HCT116 (cell line): ENCODE measurements at regions of chr15 and their contacts with region 1.

Region 1: DNA sequence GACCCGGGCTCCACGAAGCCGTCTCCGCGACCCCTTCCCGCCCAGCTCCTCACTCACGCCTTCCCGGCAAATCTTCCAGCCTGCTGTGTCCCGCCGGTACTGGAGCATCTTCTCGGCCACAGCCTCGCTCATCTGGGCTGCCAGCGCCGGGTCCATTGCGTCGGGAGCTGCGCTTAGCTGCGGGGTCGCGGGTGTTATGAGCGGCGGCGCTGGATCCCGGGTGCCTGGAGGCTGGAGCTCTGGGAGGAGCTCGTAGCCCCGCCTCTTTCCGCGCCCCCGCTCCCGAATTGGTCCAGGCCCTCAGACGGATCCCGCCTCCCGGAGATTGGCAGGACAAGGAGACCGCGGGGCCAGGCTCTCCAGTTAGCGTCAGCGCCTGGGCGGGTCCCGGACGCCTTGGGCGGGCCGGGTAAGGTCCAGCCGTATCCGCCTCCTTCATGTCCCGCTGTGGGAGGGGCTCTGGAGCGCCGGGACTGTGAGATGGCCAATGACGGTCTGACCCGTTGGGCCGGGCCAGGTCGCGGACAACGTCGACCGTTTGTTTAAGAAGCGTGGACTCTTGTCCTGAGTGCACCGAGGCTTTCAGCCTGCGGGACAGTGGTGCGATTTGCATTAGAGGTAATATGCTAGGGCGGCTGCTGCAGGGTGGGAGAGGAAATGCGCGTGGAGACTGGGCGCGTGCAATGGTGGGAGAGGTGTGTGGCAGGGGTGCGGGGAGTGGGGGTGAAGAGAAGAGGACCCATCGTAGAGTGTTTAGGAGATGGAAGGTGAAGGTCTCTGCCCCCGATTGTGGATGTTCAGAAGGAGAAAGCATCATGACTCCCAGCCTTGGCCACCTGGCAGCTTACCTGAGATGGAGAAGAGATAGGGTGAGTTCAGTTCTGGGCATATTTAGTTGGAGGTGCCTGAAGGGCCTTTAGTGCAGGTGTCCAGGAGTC is at the start of gene STARD5:
- DNase-seq: peak; percentile 90
- ATAC-seq: peak; percentile 100
- H3K4me3 ChIP-seq: peak within 1 kb of the TSS; percentile 71 to 81
- H3K27ac ChIP-seq: no peak within 1 kb of the TSS
- H3K4me1 ChIP-seq: peaks cover 2 to 16% of the 10 kb centered on the region in 2 experiments; a peak in 3 of 4 replicates
- H3K27me3 ChIP-seq: no peaks in the 10 kb centered on the region
- CTCF ChIP-seq: no peak
- POLR2A ChIP-seq: peak; percentile 35
- RAD21 ChIP-seq: no peak
- total RNA-seq, gene STARD5: 4.0 TPM

Region 2: DNA sequence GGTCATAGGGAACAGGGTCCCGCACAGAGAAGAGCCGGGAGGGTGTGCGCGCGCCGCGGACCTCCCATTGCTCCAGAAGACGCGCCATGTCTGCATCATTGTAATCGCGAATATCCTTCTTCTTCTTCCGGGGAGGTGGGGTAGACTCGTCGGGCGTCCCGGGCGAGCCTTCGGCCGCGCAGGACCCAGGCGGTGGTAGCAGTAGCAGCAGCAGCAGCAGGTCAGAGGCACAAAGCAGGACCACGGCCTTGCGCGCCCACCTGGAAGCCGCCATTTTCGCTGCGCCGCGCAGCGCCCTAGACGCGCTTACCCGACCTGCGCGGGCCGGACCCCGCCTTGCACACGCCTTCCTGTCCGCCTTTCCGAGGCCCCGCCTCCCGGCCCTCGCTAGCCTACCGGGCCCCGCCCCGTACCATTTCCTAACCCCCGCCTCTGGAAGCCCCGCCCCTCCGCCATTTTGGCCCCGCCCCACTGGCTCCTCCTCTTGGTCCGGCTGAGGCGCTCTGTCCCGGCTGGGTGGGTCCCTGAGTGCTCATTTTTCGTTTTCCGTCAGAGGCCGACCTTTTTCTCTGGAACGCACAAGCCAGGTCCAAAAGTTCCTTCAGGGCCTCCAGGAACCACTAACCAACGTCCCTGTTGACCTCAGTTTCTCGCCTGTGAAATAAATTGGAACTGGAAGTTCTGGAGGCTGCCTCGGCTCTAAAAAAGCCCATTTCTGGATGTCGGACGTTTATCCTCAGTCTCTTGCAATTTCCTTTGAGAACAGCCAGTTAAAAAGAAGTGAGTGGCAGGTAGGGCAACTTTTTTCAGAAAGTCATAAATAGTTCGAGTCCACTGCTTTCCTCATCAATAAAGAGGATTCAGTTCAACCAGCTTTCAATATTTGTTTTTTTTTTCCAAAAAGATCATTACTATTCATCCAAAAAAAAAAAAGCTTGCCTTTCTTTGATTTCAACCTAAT is 334.4 kb before region 1 on chr15 and contains the start of gene MESD:
- CTCF ChIA-PET with region 1: no interaction called
- POLR2A ChIA-PET with region 1: no interaction called
- RAD21 ChIA-PET with region 1: no interaction called
- intact Hi-C with region 1: loop called (anchors 10 kb)
- DNase-seq: peak; percentile 85
- ATAC-seq: peak; percentile 98
- H3K4me3 ChIP-seq: peak within 1 kb of the TSS; percentile 97 to 100
- H3K27ac ChIP-seq: peak within 1 kb of the TSS; percentile 77
- H3K4me1 ChIP-seq: peaks cover 13 to 29% of the 10 kb centered on the region in 2 experiments; a peak in 3 of 4 replicates
- H3K27me3 ChIP-seq: no peaks in the 10 kb centered on the region
- CTCF ChIP-seq: no peak
- POLR2A ChIP-seq: peak; percentile 89
- RAD21 ChIP-seq: no peak
- total RNA-seq, gene MESD: 22.5 TPM